Ovary (tissue), 10 donors: ENCODE measurements at regions of chr2 and their contacts with region 1.

Region 1: DNA sequence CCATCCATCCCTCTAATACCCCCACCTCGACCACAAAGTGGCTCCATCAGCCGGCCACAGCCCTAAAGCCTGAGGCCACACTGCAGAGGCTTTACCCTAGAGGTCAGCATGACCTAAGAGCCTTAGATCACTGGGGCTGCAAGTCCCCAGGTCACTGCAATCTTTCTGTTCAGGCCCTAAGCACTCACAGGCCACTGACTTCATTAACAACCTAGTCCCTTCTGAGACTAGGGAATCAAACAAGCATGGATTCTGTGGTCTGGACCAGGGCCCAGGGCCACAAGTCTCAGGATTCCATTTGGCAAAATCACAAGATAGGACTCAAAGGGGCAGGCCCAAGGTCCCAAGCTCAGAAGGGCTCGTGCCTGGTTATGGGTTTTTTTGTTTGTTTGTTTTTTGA is 37.0 kb upstream of the PKDCC start:
- DNase-seq: no peak
- H3K4me3 ChIP-seq: no peak overlapping the region
- H3K27ac ChIP-seq: no peak overlapping the region
- H3K4me1 ChIP-seq: peaks cover 2% of the 10 kb centered on the region
- H3K27me3 ChIP-seq: no peaks in the 10 kb centered on the region
- CTCF ChIP-seq: no peak
- EP300 ChIP-seq: no peak
- POLR2A ChIP-seq: no peak

Region 2: GRCh38 chr2:41989501-41990180 is 21.2 kb before region 1 on chr2:
- intact Hi-C with region 1: loop called in 1 of 4 experiments (anchors 2 kb)
- DNase-seq: no peak
- H3K4me3 ChIP-seq: no peak overlapping the region
- H3K27ac ChIP-seq: peak overlapping the region in 1 of 2 donors; percentile 32
- H3K4me1 ChIP-seq: peaks cover 9% of the 10 kb centered on the region
- H3K27me3 ChIP-seq: no peaks in the 10 kb centered on the region
- CTCF ChIP-seq: no peak
- EP300 ChIP-seq: no peak
- POLR2A ChIP-seq: no peak